ENCODE measurements at regions of chr1 and their contacts with region 1.

Region 1: GRCh38 chr1:155050560-155051341 is at the start of gene ADAM15:
- DNase-seq: peak; percentile 81
- H3K4me3 ChIP-seq: peak within 1 kb of the TSS; percentile 66 to 75 (median 74)
- H3K27ac ChIP-seq: peak within 1 kb of the TSS; percentile 53
- H3K4me1 ChIP-seq: peaks cover 24% of the 10 kb centered on the region
- H3K27me3 ChIP-seq: no peaks in the 10 kb centered on the region
- CTCF ChIP-seq: peak; percentile 94 to 99
- POLR2A ChIP-seq: no peak
- total RNA-seq, gene ADAM15: 268 and 299 TPM in 2 replicates

Region 2: DNA sequence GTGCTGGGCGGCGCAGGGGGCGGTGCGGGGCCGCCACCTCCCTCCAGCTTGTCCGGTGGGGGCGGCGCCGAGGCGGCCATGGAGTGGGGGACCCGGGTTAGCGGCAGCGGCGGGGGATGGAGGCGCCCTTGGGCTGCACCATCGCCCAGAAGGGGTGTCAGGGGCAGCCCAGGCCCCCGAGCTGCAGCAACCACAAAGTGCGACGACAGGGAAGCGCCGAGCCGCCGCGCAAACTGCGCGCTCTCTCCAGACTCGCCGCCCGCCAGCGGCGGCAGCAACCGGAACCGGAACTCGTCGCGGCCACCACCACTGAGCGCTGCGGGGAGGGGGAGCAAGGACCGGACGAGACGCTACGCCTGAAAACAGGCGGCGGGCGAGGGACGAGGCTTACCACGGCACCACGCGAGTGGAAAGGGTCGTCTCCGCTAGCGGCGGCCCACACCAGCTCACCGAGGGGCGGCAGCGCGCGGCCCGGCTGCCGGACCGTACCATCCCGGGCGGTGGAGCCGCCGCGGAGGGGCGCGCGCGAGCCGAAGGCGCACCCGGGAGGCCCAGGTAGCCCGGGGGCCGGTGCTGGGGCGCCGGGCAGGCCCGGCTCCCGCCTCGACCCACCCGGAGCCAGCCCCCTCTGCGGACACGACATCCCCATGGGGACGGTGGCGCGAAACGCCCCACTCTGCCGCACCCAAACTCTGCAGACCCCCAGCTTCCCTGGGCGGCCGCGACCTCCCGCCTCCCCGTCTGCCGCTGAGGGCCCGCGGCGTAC is 89.1 kb before region 1 on chr1 and contains the start of gene PYGO2:
- CTCF ChIA-PET with region 1: interaction called, 12 read pairs
- POLR2A ChIA-PET with region 1: no interaction called
- dilution Hi-C with region 1: no loop called
- intact Hi-C with region 1: loop called (anchors 2 kb)
- DNase-seq: peak; percentile 81
- H3K4me3 ChIP-seq: peak within 1 kb of the TSS; percentile 71 to 78 (median 74)
- H3K27ac ChIP-seq: peak within 1 kb of the TSS; percentile 82
- H3K4me1 ChIP-seq: peaks cover 28% of the 10 kb centered on the region
- H3K27me3 ChIP-seq: no peaks in the 10 kb centered on the region
- CTCF ChIP-seq: peak; percentile 35 to 65
- POLR2A ChIP-seq: peak; percentile 84
- total RNA-seq, gene PYGO2: 21.5 and 21.9 TPM in 2 replicates

Region 3: GRCh38 chr1:155038602-155039307 is 12.0 kb before region 1 on chr1:
- CTCF ChIA-PET with region 1: interaction called, 13 read pairs
- POLR2A ChIA-PET with region 1: no interaction called
- dilution Hi-C with region 1: no loop called
- intact Hi-C with region 1: no loop called
- DNase-seq: no peak
- H3K4me3 ChIP-seq: no peak overlapping the region
- H3K27ac ChIP-seq: no peak overlapping the region
- H3K4me1 ChIP-seq: peaks cover 4% of the 10 kb centered on the region
- H3K27me3 ChIP-seq: peaks cover 0 to 5% of the 10 kb centered on the region in 2 experiments
- CTCF ChIP-seq: no peak
- POLR2A ChIP-seq: no peak

Region 4: DNA sequence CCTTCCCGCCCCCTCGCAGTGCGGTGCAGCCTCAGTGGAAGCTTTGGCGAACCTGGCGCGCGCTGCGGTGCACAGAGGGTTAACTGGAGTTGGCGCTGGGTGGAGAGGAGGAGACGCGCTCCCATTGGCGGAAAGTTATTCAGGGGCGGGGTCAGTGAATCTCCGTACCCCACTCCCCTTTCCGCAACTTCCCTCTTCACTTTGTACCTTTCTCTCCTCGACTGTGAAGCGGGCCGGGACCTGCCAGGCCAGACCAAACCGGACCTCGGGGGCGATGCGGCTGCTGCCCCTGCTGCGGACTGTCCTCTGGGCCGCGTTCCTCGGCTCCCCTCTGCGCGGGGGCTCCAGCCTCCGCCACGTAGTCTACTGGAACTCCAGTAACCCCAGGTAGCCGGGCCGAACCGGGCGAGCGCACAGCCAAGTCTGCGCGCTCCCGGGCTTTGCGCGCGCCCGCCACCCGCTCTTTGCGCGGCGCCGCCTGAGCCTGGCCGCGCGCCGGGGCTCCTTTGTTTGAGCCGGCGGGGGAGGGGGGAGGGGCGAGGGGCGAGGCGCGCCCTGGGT is 12.9 kb after region 1 on chr1 and contains the start of gene EFNA4:
- CTCF ChIA-PET with region 1: interaction called, 67 read pairs
- POLR2A ChIA-PET with region 1: no interaction called
- dilution Hi-C with region 1: no loop called
- intact Hi-C with region 1: loop called (anchors 1 kb)
- DNase-seq: peak; percentile 89
- H3K4me3 ChIP-seq: peak within 1 kb of the TSS; percentile 66 to 98 (median 85)
- H3K27ac ChIP-seq: peak within 1 kb of the TSS; percentile 36
- H3K4me1 ChIP-seq: peaks cover 10% of the 10 kb centered on the region
- H3K27me3 ChIP-seq: no peaks in the 10 kb centered on the region
- CTCF ChIP-seq: no peak
- POLR2A ChIP-seq: peak; percentile 89
- total RNA-seq, gene EFNA4: 16.5 and 17.5 TPM in 2 replicates

Region 5: DNA sequence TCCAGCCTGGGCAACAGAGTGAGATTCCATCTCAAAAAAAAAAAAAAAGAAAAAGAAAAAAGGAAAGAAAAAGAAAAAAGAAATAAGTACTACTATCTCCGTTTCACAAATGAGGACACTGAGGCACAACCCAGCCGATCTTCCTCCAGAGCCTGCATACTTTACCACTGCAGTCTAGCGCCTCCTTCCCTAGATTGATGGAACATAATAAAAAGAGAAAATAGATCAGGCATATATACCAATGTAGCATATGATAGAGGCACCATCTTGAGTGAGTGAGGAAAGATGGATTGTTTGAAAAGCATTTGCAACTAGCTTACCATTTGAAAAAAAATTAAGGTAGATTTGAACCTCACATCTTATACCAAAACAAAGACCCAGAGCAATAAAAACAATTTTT is 94.7 kb after region 1 on chr1:
- CTCF ChIA-PET with region 1: no interaction called
- POLR2A ChIA-PET with region 1: no interaction called
- dilution Hi-C with region 1: no loop called
- intact Hi-C with region 1: no loop called
- DNase-seq: no peak
- H3K4me3 ChIP-seq: no peak overlapping the region
- H3K27ac ChIP-seq: no peak overlapping the region
- H3K4me1 ChIP-seq: no peaks in the 10 kb centered on the region
- H3K27me3 ChIP-seq: peaks cover 4% of the 10 kb centered on the region in 2 experiments
- CTCF ChIP-seq: no peak
- POLR2A ChIP-seq: no peak

Region 6: GRCh38 chr1:155158979-155159378 is 108.2 kb after region 1 on chr1:
- CTCF ChIA-PET with region 1: no interaction called
- POLR2A ChIA-PET with region 1: no interaction called
- dilution Hi-C with region 1: no loop called
- intact Hi-C with region 1: no loop called
- DNase-seq: no peak
- H3K4me3 ChIP-seq: no peak overlapping the region
- H3K27ac ChIP-seq: no peak overlapping the region
- H3K4me1 ChIP-seq: no peaks in the 10 kb centered on the region
- H3K27me3 ChIP-seq: no peaks in the 10 kb centered on the region
- CTCF ChIP-seq: no peak
- POLR2A ChIP-seq: no peak

Region 7: GRCh38 chr1:155172732-155173477 is 122.2 kb after region 1 on chr1 and contains the start of gene KRTCAP2:
- CTCF ChIA-PET with region 1: interaction called, 13 read pairs
- POLR2A ChIA-PET with region 1: no interaction called
- dilution Hi-C with region 1: no loop called
- intact Hi-C with region 1: no loop called
- DNase-seq: peak; percentile 93
- H3K4me3 ChIP-seq: peak within 1 kb of the TSS; percentile 52 to 91 (median 63)
- H3K27ac ChIP-seq: peak within 1 kb of the TSS; percentile 76
- H3K4me1 ChIP-seq: peaks cover 11% of the 10 kb centered on the region
- H3K27me3 ChIP-seq: no peaks in the 10 kb centered on the region
- CTCF ChIP-seq: peak; percentile 95 to 98
- POLR2A ChIP-seq: peak; percentile 97
- total RNA-seq, gene KRTCAP2: 170 and 207 TPM in 2 replicates

Region 8: GRCh38 chr1:155261852-155262673 is 211.3 kb after region 1 on chr1 and contains the start of gene SCAMP3:
- CTCF ChIA-PET with region 1: no interaction called
- POLR2A ChIA-PET with region 1: no interaction called
- dilution Hi-C with region 1: no loop called
- intact Hi-C with region 1: no loop called
- DNase-seq: peak; percentile 99
- H3K4me3 ChIP-seq: peak within 1 kb of the TSS; percentile 51 to 74 (median 64)
- H3K27ac ChIP-seq: peak within 1 kb of the TSS; percentile 6
- H3K4me1 ChIP-seq: peaks cover 8% of the 10 kb centered on the region
- H3K27me3 ChIP-seq: no peaks in the 10 kb centered on the region
- CTCF ChIP-seq: no peak
- POLR2A ChIP-seq: peak; percentile 97
- total RNA-seq, gene SCAMP3: 80.1 and 80.8 TPM in 2 replicates

Region 9: GRCh38 chr1:155420788-155421187 is 370.0 kb after region 1 on chr1:
- CTCF ChIA-PET with region 1: no interaction called
- POLR2A ChIA-PET with region 1: no interaction called
- dilution Hi-C with region 1: no loop called
- intact Hi-C with region 1: no loop called
- DNase-seq: no peak
- H3K4me3 ChIP-seq: no peak overlapping the region
- H3K27ac ChIP-seq: no peak overlapping the region
- H3K4me1 ChIP-seq: no peaks in the 10 kb centered on the region
- H3K27me3 ChIP-seq: no peaks in the 10 kb centered on the region
- CTCF ChIP-seq: no peak
- POLR2A ChIP-seq: no peak